Activated CD4-positive, alpha-beta memory T cell treated with anti-CD3 and anti-CD28 coated beads, Interleukin-2, amount 10 ng/mL, durations not matched to agents 7 days and 5 days (primary cell): ENCODE measurements at regions of chr13 and their contacts with region 1.

Region 1: DNA sequence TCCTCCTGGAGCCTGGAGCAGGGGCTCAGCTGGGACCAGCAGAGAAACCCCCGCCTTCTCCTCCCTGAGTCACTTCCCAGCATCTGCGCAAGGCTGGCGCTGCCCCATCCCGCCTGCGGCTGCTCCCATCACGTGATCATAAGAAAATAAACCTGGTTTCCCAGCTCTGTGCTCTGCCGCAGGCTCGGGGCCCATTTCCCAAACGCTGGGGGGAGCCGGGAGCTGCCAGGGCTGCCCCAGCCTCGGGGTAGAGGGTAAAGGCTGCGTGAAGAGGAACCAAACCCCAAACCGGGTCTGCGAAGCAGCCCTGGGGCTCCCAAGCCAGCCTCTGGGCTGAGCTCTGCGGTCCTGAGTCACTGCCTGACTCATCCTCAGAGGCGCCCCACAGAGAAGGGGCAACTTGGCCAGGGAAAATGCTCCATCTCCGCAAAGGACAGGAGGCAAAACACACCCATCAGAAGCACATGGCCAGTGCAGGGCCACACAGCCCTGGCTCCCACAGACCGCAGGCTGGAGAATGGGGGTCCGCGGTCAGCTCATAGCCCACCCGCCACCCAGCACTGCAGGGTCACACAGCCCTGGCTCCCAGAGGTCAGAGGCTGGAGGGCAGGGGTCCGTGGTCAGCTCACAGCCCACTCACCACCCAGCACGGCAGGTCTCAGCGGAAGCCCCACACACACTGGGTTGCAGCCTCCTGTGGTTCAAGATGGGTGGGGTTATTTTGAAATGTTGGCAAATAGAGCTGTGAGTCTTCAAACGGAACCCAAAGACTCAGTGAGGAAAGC is 67.1 kb downstream of the RASA3 start:
- DNase-seq: peak; percentile 81
- H3K4me3 Mint-ChIP-seq: peak overlapping the region; percentile 67
- H3K27ac Mint-ChIP-seq: peak overlapping the region; percentile 89
- H3K4me1 Mint-ChIP-seq: peaks cover 60% of the 10 kb centered on the region
- H3K27me3 Mint-ChIP-seq: no peaks in the 10 kb centered on the region

Region 2: DNA sequence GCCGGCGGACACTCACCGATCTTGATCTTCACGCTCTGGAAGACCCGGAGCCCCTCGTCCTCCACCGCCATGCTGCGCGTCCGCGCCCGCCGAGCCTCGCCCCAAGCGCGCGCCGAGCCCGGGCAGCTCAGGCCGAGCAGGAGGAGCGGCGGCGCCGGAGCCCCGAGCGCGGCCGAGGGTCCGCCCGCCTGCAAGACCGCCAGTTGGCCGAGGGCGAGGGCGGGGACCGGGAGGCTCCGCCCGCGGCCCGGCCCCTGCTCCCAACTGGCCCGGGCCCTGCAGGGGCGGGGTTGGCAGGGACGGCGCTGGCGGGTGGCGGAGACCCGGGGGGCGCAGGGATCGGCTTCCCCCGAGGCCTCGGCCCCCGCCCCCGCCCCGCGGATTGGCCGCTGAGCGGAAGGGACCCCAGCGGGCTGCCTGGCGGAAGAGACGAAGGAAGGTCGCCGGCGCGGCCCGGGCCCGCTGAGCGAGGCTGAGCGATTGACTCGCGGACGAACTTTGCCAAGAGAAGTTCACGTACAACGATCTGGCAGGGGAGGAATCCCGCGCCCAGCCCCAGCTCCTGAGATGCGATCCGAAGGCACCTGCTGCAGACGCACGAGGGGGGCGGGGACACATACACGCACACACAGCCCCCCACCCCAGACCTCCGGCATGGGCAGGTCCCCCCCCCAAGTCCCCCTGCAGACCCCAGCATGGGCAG is 67.2 kb after region 1 on chr13 and contains the start of gene RASA3:
- CTCF ChIA-PET with region 1: no interaction called
- POLR2A ChIA-PET with region 1: interaction called, 19 read pairs
- DNase-seq: peak; percentile 67
- H3K4me3 Mint-ChIP-seq: peak within 1 kb of the TSS; percentile 97
- H3K27ac Mint-ChIP-seq: peak within 1 kb of the TSS; percentile 92
- H3K4me1 Mint-ChIP-seq: peaks cover 60% of the 10 kb centered on the region
- H3K27me3 Mint-ChIP-seq: peaks cover 10% of the 10 kb centered on the region
- total RNA-seq, gene RASA3: 97.2 to 99.3 TPM

Region 3: DNA sequence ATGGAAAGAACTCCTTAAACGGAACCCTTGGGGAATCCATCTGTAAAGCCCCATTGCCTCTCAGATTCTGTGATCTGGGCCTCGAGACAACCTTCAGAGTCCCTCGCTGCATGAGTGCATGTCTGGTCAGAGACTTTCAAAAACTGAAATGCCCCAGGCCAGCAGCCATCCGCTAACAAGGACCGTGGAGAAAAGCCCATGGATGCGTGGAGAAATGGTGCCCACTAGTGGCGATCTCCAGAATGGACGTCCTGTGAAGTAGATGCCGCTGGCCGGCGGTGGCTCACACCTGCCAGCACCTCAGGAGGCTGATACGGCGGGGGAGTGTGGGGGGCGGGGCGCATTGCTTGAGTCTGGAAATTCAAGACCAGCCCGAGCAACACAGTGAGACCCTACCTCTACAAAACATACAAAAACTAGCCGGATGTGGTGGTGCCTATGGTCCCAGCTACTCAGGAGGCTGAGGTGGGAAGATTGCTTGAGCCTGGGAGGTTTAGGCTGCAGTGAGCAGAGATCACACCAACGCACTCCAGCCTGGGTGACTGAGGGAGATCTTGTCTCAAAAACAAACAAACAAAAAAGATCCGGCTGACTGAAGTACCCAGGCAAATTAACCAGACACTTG is 161.5 kb after region 1 on chr13:
- CTCF ChIA-PET with region 1: interaction called, 11 read pairs
- POLR2A ChIA-PET with region 1: no interaction called
- DNase-seq: peak; percentile 89
- H3K4me3 Mint-ChIP-seq: no peak overlapping the region
- H3K27ac Mint-ChIP-seq: no peak overlapping the region
- H3K4me1 Mint-ChIP-seq: peaks cover 30% of the 10 kb centered on the region
- H3K27me3 Mint-ChIP-seq: peaks cover 22% of the 10 kb centered on the region